Caco-2 (cell line): ENCODE measurements at regions of chr14 and their contacts with region 1.

Region 1: DNA sequence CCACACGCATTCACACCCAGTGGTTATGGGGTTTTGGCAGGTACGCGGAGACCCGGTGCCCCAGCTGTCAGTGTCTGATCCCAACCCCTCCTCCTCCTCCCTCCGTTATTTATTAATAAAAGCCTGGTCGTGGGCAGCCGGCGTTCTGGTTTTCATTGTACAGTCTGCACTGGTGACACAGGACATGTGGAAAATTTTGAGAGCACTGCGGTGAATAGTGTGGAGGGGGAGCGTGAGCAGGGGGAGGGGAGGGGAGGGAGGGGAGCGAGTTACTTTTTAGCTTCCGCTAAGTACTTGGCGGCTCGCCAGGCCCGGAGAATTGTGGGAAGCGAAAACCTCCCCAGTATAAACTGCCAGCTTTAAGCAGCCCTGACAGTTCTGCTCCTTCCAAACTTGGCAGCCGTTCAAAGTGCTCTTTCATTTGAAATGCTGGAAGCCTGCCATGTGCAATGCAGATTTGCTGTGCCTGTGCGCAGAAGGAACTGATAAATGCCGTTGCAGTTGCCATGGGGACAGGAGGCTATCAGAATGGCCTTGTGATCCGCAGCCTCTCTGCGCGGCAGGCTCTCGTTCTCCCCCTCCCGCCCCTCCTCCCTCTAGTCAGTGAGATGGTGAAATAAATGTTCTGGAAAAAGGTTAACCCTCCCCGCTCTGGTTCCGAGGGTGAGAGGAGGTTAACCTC is 11.7 kb upstream of the IRF2BPL start:
- DNase-seq: peak; percentile 75 to 81
- H3K4me3 ChIP-seq: peak overlapping the region; percentile 39
- H3K4me3 Mint-ChIP-seq: peak overlapping the region; percentile 80
- H3K27ac Mint-ChIP-seq: peak overlapping the region; percentile 83
- H3K4me1 ChIP-seq: peaks cover 35% of the 10 kb centered on the region
- H3K4me1 Mint-ChIP-seq: peaks cover 47% of the 10 kb centered on the region
- H3K27me3 ChIP-seq: no peaks in the 10 kb centered on the region
- H3K27me3 Mint-ChIP-seq: no peaks in the 10 kb centered on the region
- CTCF ChIP-seq: no peak

Region 2: DNA sequence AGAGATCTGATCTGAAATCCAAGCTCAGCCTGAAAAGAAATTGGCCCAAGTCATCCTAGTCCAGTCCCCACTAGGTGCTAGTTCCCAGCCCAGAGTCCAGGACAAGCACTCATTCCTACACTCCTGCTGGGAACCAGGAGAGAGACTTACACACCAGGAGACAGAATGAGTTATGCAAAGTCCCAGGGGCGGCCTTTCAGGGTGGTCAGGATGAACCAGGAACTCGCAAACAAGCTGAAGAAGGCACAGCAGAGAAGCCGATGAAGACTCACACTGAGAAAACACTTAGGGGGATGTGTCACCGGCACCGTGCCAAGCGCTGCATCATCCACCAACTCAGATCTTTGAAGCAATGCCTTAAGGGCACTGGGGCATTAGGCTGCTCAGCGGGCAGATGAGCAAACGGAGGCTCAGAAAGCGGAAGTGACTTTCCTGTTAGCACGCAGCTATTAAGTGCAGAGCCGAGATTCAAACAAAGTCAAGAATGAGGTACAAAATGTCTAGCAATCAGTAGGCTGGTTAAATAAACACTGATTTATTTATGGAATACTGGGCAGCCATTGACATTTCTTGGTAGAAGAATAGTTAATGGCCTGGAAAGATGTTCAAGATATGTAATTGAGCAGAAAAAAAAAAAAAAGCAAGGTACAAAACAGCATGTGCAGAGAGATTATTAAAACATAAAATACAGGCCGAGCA is 135.3 kb before region 1 on chr14:
- CTCF ChIA-PET with region 1: no interaction called
- POLR2A ChIA-PET with region 1: no interaction called
- intact Hi-C with region 1: no loop called
- DNase-seq: no peak
- H3K4me3 ChIP-seq: no peak overlapping the region
- H3K4me3 Mint-ChIP-seq: no peak overlapping the region
- H3K27ac Mint-ChIP-seq: no peak overlapping the region
- H3K4me1 ChIP-seq: no peaks in the 10 kb centered on the region
- H3K4me1 Mint-ChIP-seq: no peaks in the 10 kb centered on the region
- H3K27me3 ChIP-seq: no peaks in the 10 kb centered on the region
- H3K27me3 Mint-ChIP-seq: no peaks in the 10 kb centered on the region
- CTCF ChIP-seq: no peak

Region 3: GRCh38 chr14:76968621-76969063 is 71.6 kb before region 1 on chr14:
- CTCF ChIA-PET with region 1: interaction called, 3 read pairs
- POLR2A ChIA-PET with region 1: no interaction called
- intact Hi-C with region 1: loop called (anchors 5 kb)
- DNase-seq: peak; percentile 63 to 65
- H3K4me3 ChIP-seq: no peak overlapping the region
- H3K4me3 Mint-ChIP-seq: no peak overlapping the region
- H3K27ac Mint-ChIP-seq: peak overlapping the region; percentile 46
- H3K4me1 ChIP-seq: peaks cover 19% of the 10 kb centered on the region
- H3K4me1 Mint-ChIP-seq: peaks cover 25% of the 10 kb centered on the region
- H3K27me3 ChIP-seq: no peaks in the 10 kb centered on the region
- H3K27me3 Mint-ChIP-seq: no peaks in the 10 kb centered on the region
- CTCF ChIP-seq: peak in 1 of 2 experiments; percentile 28

Region 4: DNA sequence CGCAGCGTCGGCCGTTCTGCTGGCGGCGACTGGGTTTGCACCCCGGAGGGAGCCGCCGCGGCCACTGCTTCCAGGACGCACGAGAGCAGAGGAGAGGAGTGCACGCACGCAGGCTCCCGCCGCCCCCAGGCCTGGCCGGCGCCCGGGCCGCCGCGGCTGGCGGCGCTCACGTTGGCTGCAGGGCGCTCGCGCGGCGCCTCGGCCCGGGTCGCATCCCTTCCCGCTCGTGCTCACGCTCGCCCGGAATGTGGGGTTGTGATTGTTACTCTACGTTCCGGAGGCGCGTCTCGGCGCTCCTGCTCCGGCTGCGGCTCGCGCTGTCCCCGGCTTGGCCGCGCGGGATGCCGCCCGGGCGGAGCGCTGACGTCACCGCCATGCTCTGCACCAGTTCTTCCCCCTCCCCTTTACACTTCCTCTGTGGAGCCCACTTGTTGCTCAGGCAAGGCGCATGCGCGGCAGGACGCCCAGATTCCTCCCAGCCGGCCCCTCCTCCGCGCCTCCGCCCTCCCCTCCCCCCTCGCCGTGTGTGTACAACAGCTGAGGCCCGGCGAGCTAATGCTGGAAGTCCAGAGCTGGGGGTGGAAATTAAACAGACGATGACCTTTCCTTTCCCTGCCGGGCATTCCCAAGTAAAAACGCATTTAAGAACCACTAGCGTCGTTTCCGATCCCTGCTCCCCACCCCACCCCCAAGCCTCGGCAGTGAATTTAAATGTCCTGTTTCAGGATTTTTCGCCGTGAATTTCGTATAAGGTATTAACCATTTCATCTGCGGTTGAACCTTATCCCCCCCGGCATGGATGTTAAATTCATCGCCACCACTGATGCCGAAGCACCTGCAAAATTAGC is 11.6 kb before region 1 on chr14 and contains the start of gene IRF2BPL:
- CTCF ChIA-PET with region 1: interaction called, 4 read pairs
- POLR2A ChIA-PET with region 1: interaction called, 8 read pairs
- intact Hi-C with region 1: loop called (anchors 1 kb)
- DNase-seq: peak; percentile 96 to 99
- H3K4me3 ChIP-seq: peak within 1 kb of the TSS; percentile 90
- H3K4me3 Mint-ChIP-seq: peak within 1 kb of the TSS; percentile 89
- H3K27ac Mint-ChIP-seq: peak within 1 kb of the TSS; percentile 92
- H3K4me1 ChIP-seq: peaks cover 53% of the 10 kb centered on the region
- H3K4me1 Mint-ChIP-seq: peaks cover 27% of the 10 kb centered on the region
- H3K27me3 ChIP-seq: no peaks in the 10 kb centered on the region
- H3K27me3 Mint-ChIP-seq: no peaks in the 10 kb centered on the region
- CTCF ChIP-seq: no peak
- total RNA-seq, gene IRF2BPL: 24.1 and 24.7 TPM in 2 replicates